Stomach (tissue), 19 donors: ENCODE measurements at regions of chr3 and their contacts with region 1.

Region 1: DNA sequence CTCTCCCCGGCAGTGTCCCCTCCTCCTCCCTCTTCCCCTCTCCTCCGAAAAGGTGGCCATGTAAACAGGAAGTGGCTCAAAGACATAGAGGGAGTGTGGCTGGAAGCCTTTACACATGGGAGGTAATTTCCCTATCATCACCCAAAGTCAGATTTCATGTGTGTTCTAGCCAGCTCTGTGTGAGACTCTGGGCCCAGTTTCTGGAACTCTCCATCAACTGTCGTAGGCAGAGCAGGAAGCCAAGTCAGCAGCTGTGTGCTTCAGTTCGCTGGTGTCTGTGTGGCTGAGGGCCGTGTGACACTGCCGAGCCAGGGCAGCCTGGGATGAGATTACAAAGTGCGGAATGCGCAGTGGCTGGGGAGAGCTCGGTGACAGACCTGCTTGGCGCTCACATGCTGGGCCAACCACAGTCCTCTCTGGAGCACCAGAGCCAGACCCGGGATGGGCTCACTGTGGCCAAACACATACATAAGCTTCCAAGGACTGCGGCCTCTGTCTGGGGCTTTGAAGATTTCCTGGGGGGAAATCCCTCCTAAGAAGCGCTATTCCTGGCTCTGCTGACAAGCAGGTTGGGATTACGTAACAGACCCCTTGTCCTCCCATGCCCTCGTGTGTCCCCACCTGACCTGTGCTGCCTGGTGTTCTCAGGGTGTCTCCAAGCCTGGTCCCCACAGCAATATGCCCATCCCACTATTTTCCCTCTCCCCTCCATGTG is 50.7 kb downstream of the UMPS start:
- DNase-seq: peak in 1 of 2 donors; percentile 87
- H3K4me3 ChIP-seq: no peak overlapping the region
- H3K27ac ChIP-seq: peak overlapping the region; percentile 10 to 86 (median 80)
- H3K4me1 ChIP-seq: peaks cover 11 to 35% (median 25%) of the 10 kb centered on the region in 4 donors
- H3K27me3 ChIP-seq: no peaks in the 10 kb centered on the region
- CTCF ChIP-seq: no peak
- EP300 ChIP-seq: no peak
- POLR2A ChIP-seq: no peak

Region 2: DNA sequence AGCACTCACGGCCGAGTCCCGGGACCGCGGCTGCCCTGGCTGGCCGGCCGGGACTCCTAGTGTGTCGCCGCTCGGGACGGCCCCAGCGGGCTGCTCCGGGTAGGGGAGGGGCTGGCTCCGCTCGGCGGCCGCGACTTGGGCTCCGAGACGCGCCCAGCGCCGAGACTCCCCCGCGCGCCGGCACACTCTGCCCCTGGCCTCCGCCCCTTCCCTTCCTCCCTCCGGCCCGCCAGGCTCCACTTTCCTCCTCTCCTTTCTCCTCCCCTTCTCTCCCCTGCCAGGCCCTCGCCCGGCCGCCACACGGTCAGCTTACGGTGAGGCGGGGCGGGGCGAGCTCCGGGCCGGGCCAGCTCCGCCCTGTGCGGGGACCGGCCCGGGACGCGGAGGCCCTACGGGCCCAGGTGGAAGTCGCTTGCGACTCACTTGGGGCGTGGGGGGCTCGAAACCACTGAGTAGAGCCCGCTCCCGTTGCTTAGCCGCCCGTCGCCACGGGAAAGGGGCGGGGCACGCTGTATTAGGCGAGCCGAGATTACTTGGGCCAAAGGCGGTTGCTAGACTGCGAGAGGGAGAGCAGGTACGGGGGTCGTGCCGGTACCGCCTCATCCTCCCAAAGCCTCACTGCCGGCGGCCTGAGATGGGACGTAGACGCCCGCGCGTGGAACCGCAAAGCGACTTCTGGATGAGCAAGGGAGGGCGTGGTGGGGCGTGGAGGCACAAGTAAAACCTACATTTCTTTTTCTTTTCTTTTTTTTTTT is 106.4 kb after region 1 on chr3 and contains the start of gene ITGB5:
- intact Hi-C with region 1: loop called (anchors 5 kb)
- DNase-seq: peak; percentile 83 to 90
- H3K4me3 ChIP-seq: peak within 1 kb of the TSS; percentile 64 to 78 (median 73)
- H3K27ac ChIP-seq: peak within 1 kb of the TSS; percentile 89 to 93 (median 92)
- H3K4me1 ChIP-seq: peaks cover 10 to 52% (median 25%) of the 10 kb centered on the region in 4 donors
- H3K27me3 ChIP-seq: peaks cover 0 to 19% (median 4%) of the 10 kb centered on the region in 3 donors
- CTCF ChIP-seq: no peak
- EP300 ChIP-seq: no peak
- POLR2A ChIP-seq: no peak
- total RNA-seq, gene ITGB5: 49.2 to 205 (median 81.1) TPM